ENCODE measurements at regions of chrX and their contacts with region 1.

Region 1: GRCh38 chrX:129522184-129523078 is 859 bp downstream of the SMARCA1 start:
- DNase-seq: peak; percentile 63
- ATAC-seq: peak; percentile 73
- H3K4me3 ChIP-seq: peak overlapping the region; percentile 97
- H3K27ac ChIP-seq: peak overlapping the region; percentile 29; the same call in 1 of the 2 replicates
- H3K4me1 ChIP-seq: no peaks in the 10 kb centered on the region
- H3K27me3 ChIP-seq: no peaks in the 10 kb centered on the region
- CTCF ChIP-seq: no peak; the same call in 1 of the 2 replicates

Region 2: GRCh38 chrX:129478516-129478915 is 43.9 kb before region 1 on chrX:
- CTCF ChIA-PET with region 1: interaction called, 10 read pairs
- POLR2A ChIA-PET with region 1: no interaction called
- intact Hi-C with region 1: no loop called
- DNase-seq: no peak
- ATAC-seq: no peak
- H3K4me3 ChIP-seq: no peak overlapping the region
- H3K27ac ChIP-seq: no peak overlapping the region
- H3K4me1 ChIP-seq: no peaks in the 10 kb centered on the region
- H3K27me3 ChIP-seq: no peaks in the 10 kb centered on the region
- CTCF ChIP-seq: no peak

Region 3: GRCh38 chrX:129493643-129494042 is 28.8 kb before region 1 on chrX:
- CTCF ChIA-PET with region 1: no interaction called
- POLR2A ChIA-PET with region 1: no interaction called
- intact Hi-C with region 1: loop called (anchors 2 kb)
- DNase-seq: peak; percentile 77
- ATAC-seq: peak; percentile 73
- H3K4me3 ChIP-seq: no peak overlapping the region; the same call in 1 of the 2 replicates
- H3K27ac ChIP-seq: peak overlapping the region; percentile 86
- H3K4me1 ChIP-seq: peaks cover 45% of the 10 kb centered on the region
- H3K27me3 ChIP-seq: no peaks in the 10 kb centered on the region
- CTCF ChIP-seq: no peak

Region 4: GRCh38 chrX:129540068-129540653 is 17.7 kb after region 1 on chrX and contains the start of gene OCRL:
- CTCF ChIA-PET with region 1: interaction called, 7 read pairs
- POLR2A ChIA-PET with region 1: interaction called, 17 read pairs
- intact Hi-C with region 1: loop called (anchors 2 kb)
- DNase-seq: peak; percentile 77
- ATAC-seq: peak; percentile 89
- H3K4me3 ChIP-seq: peak within 1 kb of the TSS; percentile 89
- H3K27ac ChIP-seq: 0 out of 2 replicates have a peak within 1 kb of the TSS, but pooled peaks have one; percentile 23
- H3K4me1 ChIP-seq: peaks cover 6% of the 10 kb centered on the region; the same call in 1 of the 2 replicates
- H3K27me3 ChIP-seq: no peaks in the 10 kb centered on the region
- CTCF ChIP-seq: peak; percentile 60; the same call in 1 of the 2 replicates
- total RNA-seq, gene OCRL: 18.7 and 19.4 TPM in 2 replicates

Measured in PC-3 (cell line).